ENCODE measurements at regions of chr9 and their contacts with region 1.

Region 1: DNA sequence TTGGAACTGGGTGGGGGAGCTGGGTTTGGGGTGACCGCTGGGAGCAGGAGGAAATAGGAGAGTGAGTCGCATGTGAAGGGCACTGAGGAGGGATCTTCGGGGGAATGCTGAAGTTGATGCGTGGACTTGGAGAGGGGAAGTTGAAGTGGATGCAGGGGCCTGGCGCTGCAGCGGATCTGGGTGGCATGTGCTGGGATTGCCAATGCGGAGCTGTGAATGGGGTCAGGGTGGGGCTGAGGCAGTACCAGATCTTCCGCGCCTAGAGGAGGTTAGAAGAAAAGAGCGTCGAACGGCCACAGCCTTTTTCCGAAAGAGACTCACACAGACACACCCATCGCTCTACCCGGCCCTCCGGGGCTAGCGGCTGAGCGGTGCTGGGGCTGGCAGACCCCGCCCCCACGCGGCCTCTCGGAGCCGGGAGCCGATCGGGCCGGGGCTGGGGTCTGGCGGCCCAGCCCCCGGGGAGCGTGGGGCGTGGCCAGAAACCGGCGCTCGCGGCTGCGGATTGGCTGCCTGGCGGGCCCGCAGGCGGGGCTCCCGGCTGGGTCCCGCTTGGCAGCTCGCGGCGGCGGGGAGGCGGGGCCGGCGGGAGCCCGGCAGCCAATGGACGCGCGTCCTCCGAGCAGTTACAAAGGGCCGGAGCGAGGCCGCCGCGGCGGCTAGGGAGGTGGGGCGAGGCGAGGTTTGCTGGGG is at the start of gene TGFBR1:
- DNase-seq: peak; percentile 90 to 94 (median 94)
- H3K4me3 ChIP-seq: peak within 1 kb of the TSS; percentile 47 to 91 (median 81)
- H3K27ac ChIP-seq: peak within 1 kb of the TSS; percentile 40 to 81
- H3K4me1 ChIP-seq: peaks cover 35 to 49% (median 46%) of the 10 kb centered on the region in 4 experiments
- H3K27me3 ChIP-seq: no peaks in the 10 kb centered on the region

Region 2: DNA sequence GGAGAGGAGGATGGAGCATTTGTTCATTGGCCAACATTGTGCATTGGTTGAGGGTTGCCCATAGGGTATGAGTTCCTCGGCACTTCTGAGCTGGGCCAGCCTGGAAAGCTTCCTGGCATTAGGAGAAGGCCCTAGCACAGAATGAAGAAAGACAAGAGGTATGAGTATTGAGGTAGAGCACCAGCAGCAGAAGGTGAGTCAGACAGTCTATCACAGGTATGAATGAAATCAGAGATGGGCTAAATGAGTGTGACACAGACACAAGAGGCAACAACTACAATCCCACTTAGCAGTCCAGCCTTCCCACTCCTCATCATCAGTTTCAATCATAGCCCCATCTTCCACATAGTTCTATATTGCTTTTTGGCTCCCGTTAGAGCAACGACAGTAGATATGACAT is 25.1 kb before region 1 on chr9:
- CTCF ChIA-PET with region 1: interaction called, 12 read pairs
- POLR2A ChIA-PET with region 1: no interaction called
- DNase-seq: no peak
- H3K4me3 ChIP-seq: no peak overlapping the region
- H3K27ac ChIP-seq: no peak overlapping the region
- H3K4me1 ChIP-seq: peaks cover 3 to 34% (median 22%) of the 10 kb centered on the region in 4 experiments
- H3K27me3 ChIP-seq: no peaks in the 10 kb centered on the region

Region 3: DNA sequence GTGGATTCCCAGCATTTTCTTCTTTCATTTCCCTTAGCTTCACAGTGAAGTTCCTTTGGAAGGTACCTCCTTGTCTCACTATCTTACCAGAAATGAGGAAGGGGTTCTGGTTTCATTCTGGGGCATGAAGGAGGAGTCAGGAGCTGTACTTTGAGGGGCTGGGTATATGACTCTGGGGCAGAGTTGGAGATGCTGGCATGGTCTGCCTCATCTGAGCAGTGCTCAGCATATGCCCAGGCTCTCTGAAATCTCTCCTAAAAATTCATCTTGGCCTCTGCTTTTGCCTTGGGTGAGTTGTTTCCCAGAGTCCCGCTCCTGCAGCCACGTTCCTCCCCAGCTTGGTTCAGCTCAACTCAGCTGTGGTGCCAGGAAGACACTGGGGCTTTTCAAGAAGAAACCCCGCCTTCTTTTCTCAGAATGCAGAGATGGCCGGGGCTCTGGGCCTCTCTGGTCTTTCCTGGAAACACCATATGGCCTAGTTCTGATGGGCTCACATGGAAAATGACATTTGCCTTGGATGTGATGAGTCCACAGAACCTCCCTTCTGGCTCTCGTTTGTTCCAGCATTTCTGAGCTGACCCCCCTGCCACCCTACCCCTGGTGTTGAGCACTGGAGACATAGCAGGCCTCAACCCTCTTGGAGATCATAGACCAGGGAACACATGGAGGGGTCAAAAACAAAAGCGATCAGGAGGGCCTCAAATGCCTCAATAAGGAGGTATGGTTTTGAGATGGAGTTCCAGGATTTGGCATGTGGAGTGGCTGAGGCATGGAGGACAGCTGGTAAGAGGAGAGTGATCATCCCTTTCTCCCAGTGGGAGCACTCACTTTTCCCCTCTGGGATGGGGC is 11.7 kb before region 1 on chr9:
- CTCF ChIA-PET with region 1: interaction called, 17 read pairs
- POLR2A ChIA-PET with region 1: no interaction called
- DNase-seq: no peak
- H3K4me3 ChIP-seq: no peak overlapping the region
- H3K27ac ChIP-seq: no peak overlapping the region
- H3K4me1 ChIP-seq: peaks cover 0 to 22% (median 2%) of the 10 kb centered on the region in 4 experiments
- H3K27me3 ChIP-seq: no peaks in the 10 kb centered on the region

Region 4: DNA sequence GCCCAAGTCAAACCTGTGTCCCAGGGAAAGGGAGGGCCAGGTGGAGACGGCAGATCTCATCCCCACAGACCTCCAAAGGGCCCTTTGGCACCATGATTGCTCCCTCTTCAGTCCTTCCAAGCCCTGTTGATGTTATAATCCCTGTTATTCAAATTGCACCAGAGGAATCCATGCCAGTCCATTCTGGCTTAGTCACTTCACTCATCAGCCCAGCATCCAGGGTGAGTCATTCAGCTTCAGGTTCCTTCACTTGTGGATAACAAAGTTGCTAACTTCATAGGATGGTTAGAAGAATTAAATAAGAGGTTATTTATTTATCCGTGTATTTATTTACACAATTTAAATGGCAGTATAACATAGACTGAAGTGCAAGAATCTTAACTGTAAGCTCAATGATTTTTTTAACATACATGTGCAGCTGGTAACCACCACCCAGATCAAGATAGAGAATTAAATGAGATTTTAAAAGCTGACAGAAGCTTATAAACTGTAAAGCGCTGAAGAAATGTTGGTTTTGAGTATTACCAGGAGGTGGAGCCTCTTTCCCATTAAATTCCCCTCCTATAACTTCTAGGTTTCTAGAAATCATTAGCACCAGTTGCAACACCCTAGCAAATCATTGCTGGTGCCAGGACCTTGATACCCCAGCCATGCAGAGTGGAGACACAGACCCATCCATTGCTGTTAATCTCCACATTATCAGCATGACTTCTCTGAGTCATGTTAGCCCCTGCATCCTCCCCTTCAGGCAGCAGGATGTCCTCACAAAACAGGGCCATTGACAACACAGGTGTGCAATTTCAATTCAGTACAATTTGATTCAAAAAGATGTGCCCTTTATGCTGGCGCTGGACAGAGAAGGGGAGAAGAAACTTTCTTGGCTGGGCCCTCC is 194.9 kb after region 1 on chr9:
- CTCF ChIA-PET with region 1: no interaction called
- POLR2A ChIA-PET with region 1: no interaction called
- DNase-seq: peak in 2 of 3 donors; percentile 21 to 34
- H3K4me3 ChIP-seq: no peak overlapping the region
- H3K27ac ChIP-seq: no peak overlapping the region
- H3K4me1 ChIP-seq: peaks cover 0 to 4% (median 1%) of the 10 kb centered on the region in 4 experiments
- H3K27me3 ChIP-seq: peaks cover 0 to 5% (median 0%) of the 10 kb centered on the region in 5 experiments